Mammary epithelial cell (primary cell): ENCODE measurements at regions of chr1 and their contacts with region 1.

Region 1: GRCh38 chr1:155648551-155649147 is 38.6 kb downstream of the MSTO1 start:
- DNase-seq: peak; percentile 95
- H3K4me3 ChIP-seq: peak overlapping the region; percentile 39 to 58 (median 46)
- H3K27ac ChIP-seq: peak overlapping the region; percentile 78
- H3K4me1 ChIP-seq: peaks cover 56% of the 10 kb centered on the region
- H3K27me3 ChIP-seq: no peaks in the 10 kb centered on the region
- CTCF ChIP-seq: peak; percentile 73 to 80

Region 2: DNA sequence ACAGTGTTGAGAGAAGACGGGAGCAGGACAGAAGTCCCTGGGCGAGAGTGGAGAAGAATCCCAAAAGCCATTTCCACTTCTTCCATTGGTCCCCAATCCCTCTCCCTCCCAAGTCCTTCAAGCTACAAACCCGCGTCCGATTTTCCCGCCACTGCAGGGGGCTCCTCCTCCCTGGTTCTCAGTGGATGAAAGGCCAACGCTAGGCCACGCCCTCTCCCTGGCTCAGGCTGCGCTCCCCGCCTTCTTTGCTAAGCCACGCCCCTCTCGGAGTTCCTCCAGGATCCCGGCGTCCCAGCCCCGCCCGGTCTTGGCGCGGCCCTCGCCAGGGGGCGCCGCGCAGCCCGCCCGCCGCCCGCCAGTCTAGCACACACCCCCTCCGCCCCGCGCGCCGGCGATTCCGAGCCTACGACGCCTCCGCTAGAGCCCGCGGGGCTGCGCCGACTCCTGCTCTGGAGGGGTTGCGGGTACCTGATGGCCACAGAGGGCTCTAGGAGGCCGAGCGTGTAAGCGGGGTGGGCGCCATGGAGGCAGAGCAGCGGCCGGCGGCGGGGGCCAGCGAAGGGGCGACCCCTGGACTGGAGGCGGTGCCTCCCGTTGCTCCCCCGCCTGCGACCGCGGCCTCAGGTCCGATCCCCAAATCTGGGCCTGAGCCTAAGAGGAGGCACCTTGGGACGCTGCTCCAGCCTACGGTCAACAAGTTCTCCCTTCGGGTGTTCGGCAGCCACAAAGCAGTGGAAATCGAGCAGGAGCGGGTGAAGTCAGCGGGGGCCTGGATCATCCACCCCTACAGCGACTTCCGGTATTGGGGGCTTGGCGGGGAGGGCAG is 371.4 kb before region 1 on chr1 and contains the start of gene HCN3:
- CTCF ChIA-PET with region 1: no interaction called
- dilution Hi-C with region 1: no loop called
- in situ Hi-C with region 1: no loop called
- intact Hi-C with region 1: loop called (anchors 1 kb)
- DNase-seq: peak; percentile 90
- H3K4me3 ChIP-seq: peak within 1 kb of the TSS; percentile 47 to 86 (median 68)
- H3K27ac ChIP-seq: no peak within 1 kb of the TSS
- H3K4me1 ChIP-seq: peaks cover 20% of the 10 kb centered on the region
- H3K27me3 ChIP-seq: no peaks in the 10 kb centered on the region
- CTCF ChIP-seq: peak; percentile 34 to 48
- total RNA-seq, gene HCN3: 1.3 to 4.8 TPM

Region 3: GRCh38 chr1:155529929-155530328 is 118.7 kb before region 1 on chr1:
- CTCF ChIA-PET with region 1: no interaction called
- dilution Hi-C with region 1: no loop called
- in situ Hi-C with region 1: no loop called
- intact Hi-C with region 1: loop called (anchors 5 kb)
- DNase-seq: no peak
- H3K4me3 ChIP-seq: no peak overlapping the region
- H3K27ac ChIP-seq: no peak overlapping the region
- H3K4me1 ChIP-seq: no peaks in the 10 kb centered on the region
- H3K27me3 ChIP-seq: no peaks in the 10 kb centered on the region
- CTCF ChIP-seq: no peak

Region 4: GRCh38 chr1:155591770-155592169 is 56.9 kb before region 1 on chr1:
- CTCF ChIA-PET with region 1: no interaction called
- dilution Hi-C with region 1: no loop called
- in situ Hi-C with region 1: no loop called
- intact Hi-C with region 1: loop called (anchors 2 kb)
- DNase-seq: peak; percentile 33
- H3K4me3 ChIP-seq: no peak overlapping the region
- H3K27ac ChIP-seq: no peak overlapping the region
- H3K4me1 ChIP-seq: no peaks in the 10 kb centered on the region
- H3K27me3 ChIP-seq: no peaks in the 10 kb centered on the region
- CTCF ChIP-seq: peak; percentile 43 to 50

Region 5: DNA sequence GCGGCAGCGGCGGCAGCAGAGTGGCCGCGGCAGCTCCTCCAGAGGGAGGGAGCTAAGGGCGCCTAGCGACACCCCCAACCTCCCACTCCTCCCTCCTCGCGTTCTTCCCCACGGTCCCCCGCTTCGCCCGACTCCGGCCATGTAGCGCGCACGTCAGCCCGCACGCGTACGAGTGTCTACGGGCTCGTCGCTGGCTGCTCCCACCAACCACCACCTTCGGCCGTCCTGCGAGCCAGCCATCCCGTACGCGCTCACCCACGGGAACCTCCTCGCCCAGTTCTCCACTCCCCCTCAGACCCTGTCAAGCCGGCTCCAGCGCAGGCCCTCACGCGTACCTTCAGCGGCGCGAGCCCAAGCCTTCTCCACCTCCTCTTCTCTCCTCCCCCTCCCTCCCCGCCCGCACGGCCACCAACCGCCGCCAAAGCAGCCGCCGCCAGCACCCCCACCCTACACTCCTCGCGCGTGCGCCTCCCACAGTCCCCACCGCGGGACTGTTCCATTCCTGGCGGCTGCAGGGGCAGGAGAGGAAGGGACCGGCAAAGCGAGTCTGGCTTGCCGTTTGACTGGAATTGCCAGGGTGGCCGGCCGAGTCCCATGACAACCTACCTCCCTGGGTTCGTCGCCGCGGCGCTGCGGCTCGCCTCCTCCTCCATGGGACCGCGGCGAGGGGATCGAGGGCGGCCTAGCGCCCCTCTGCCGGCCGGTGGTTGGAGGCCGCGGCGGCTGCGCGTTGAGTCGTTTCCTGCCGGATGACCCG is 39.9 kb after region 1 on chr1 and contains the start of gene YY1AP1:
- CTCF ChIA-PET with region 1: no interaction called
- dilution Hi-C with region 1: no loop called
- in situ Hi-C with region 1: no loop called
- intact Hi-C with region 1: loop called (anchors 2 kb)
- DNase-seq: peak; percentile 91
- H3K4me3 ChIP-seq: peak within 1 kb of the TSS; percentile 56 to 100 (median 87)
- H3K27ac ChIP-seq: peak within 1 kb of the TSS; percentile 83
- H3K4me1 ChIP-seq: peaks cover 15% of the 10 kb centered on the region
- H3K27me3 ChIP-seq: no peaks in the 10 kb centered on the region
- CTCF ChIP-seq: no peak
- total RNA-seq, gene YY1AP1: 40.2 to 46.8 TPM

Region 6: DNA sequence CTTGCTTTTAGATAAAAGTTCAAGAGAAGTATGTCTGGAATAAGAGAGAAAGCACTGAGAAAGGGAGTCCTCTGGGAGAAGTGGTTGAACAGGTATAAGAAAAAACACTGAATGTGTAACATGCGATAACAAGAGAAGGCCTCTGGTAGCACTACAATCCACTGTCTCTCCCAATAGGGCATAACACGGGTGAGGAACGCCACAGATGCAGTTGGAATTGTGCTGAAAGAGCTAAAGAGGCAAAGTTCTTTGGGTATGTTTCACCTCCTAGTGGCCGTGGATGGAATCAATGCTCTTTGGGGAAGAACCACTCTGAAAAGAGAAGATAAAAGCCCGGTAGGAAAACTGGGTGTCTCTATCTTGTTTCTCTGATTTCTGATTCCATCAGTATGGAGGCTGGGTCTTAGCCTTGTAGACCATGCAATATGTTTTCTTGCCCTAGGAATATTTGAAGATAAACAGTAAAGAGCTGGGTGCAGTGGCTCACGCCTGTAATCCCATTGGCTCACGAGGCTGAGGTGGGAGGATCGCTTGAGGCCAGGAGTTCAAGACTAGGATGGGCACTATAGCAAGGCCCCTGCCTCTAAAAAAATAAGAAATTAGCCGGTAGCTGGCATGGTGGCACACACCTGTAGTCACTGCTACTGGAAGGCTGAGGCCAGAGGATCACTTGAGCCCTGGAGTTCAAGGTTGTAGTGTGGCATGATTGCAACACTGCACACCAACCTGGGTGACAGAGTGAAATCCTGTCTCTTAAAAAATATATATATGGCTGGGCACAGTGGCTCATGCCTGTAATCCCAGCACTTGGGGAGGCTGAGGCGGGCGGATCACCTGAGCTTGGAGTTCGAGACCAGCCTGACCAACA is 80.6 kb after region 1 on chr1:
- CTCF ChIA-PET with region 1: no interaction called
- dilution Hi-C with region 1: no loop called
- in situ Hi-C with region 1: no loop called
- intact Hi-C with region 1: loop called (anchors 1 kb)
- DNase-seq: peak; percentile 66
- H3K4me3 ChIP-seq: no peak overlapping the region
- H3K27ac ChIP-seq: no peak overlapping the region
- H3K4me1 ChIP-seq: no peaks in the 10 kb centered on the region
- H3K27me3 ChIP-seq: no peaks in the 10 kb centered on the region
- CTCF ChIP-seq: peak; percentile 66 to 72